ENCODE measurements at regions of chr16 and their contacts with region 1.

Region 1: GRCh38 chr16:29943846-29944669 is 17.8 kb upstream of the TMEM219 start:
- DNase-seq: no peak
- H3K4me3 ChIP-seq: no peak overlapping the region
- H3K4me3 Mint-ChIP-seq: no peak overlapping the region
- H3K27ac ChIP-seq: no peak overlapping the region
- H3K27ac Mint-ChIP-seq: no peak overlapping the region
- H3K4me1 ChIP-seq: no peaks in the 10 kb centered on the region
- H3K4me1 Mint-ChIP-seq: no peaks in the 10 kb centered on the region
- H3K27me3 ChIP-seq: no peaks in the 10 kb centered on the region
- H3K27me3 Mint-ChIP-seq: peaks cover 6 to 12% (median 10%) of the 10 kb centered on the region in 3 donors
- CTCF ChIP-seq: no peak

Region 2: GRCh38 chr16:29848420-29849297 is 95.4 kb before region 1 on chr16:
- intact Hi-C with region 1: no loop called
- DNase-seq: peak; percentile 64 to 70 (median 64)
- H3K4me3 ChIP-seq: no peak overlapping the region
- H3K4me3 Mint-ChIP-seq: no peak overlapping the region
- H3K27ac ChIP-seq: no peak overlapping the region
- H3K27ac Mint-ChIP-seq: no peak overlapping the region
- H3K4me1 ChIP-seq: no peaks in the 10 kb centered on the region
- H3K4me1 Mint-ChIP-seq: no peaks in the 10 kb centered on the region
- H3K27me3 ChIP-seq: no peaks in the 10 kb centered on the region
- H3K27me3 Mint-ChIP-seq: peaks cover 0 to 2% (median 1%) of the 10 kb centered on the region in 3 donors
- CTCF ChIP-seq: peak; percentile 92

Region 3: DNA sequence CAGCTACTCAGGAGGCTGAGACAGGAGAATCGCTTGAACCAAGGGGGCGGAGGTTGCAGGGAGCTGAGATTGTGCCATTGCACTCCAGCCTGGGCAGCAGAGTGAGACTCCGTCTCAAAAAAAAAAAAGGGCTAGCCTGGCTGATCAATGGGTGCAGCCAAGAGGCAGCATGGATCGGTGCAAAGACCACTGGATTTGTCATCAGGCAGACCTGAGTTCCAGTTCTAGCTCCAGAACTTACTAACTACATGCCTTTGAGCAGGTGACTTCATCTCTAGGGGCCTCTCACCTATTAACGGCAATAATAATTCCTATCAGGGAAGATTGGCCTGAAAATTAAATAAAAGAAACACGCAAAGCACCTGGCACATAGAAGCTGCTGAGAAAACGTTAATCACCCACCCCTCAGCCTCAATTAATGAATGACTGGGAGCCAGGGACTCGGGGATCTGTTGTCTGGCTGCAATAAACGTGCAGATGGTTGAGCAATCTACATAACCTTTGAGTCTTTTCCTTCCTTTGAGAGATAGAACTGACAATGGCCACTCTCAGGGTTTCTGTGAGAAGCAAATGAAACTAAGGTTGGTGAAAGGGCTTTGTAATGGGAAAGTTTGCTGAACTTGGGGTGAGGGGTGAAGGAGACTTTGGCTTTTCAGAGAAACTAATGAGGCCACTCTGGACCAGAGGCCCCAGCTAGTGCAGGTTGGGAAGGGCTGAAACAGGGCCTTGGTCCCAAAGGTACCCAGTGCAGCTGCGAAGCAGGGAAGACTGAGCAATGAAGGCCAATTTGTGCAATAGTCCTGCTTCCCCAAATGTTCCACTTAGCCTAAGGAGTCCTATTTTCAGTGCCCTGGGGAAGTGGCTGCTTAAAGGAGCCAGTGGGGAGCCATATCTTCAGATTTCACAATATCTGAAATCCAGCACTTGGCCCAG is 52.3 kb before region 1 on chr16:
- intact Hi-C with region 1: loop called in 1 of 2 experiments (anchors 2 kb)
- DNase-seq: peak; percentile 24 to 52 (median 42)
- H3K4me3 ChIP-seq: no peak overlapping the region
- H3K4me3 Mint-ChIP-seq: no peak overlapping the region
- H3K27ac ChIP-seq: no peak overlapping the region
- H3K27ac Mint-ChIP-seq: peak overlapping the region in 3 of 7 donors; percentile 15 to 40 (median 28)
- H3K4me1 ChIP-seq: peaks cover 12 to 16% of the 10 kb centered on the region in 2 donors
- H3K4me1 Mint-ChIP-seq: peaks cover 12% of the 10 kb centered on the region
- H3K27me3 ChIP-seq: no peaks in the 10 kb centered on the region
- H3K27me3 Mint-ChIP-seq: peaks cover 4 to 8% (median 4%) of the 10 kb centered on the region in 3 donors
- CTCF ChIP-seq: no peak

Region 4: DNA sequence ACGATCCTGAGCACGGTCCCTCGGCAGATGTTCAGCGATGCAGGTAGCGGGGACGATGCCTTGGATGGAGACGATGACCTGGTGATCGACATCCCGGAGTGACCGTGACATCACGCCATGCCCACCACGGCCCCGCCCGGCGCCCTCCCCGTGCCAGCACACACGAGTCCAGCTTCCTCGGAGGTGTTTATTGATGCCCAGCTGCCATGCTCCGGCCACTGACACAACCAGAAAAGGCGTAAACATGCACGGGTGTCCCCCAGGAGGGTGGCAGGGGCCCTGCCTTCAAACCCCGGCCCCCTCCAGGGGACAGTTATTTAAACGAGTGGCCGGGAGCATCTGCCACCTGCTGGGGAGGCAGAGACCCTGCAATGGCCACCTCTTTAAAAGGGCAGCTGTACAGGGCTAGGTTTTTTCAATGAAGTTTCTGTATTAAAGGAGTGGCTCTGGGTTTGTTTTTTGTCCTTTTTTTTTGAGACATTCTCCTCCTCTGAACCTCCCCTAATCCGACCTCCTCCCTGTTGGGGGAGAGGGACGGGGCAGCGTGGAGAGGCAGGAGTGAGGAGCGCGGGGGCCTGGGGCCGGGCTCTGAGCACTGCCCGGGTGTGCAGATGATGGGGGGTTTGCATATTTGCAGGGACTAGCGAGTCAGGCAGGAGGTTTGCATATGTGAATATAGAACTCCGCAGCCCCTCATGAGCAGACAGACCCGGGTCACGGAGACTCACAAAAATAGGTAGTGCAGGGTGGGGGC is 61.5 kb after region 1 on chr16:
- intact Hi-C with region 1: loop called in 1 of 2 experiments (anchors 5 kb)
- DNase-seq: peak; percentile 15 to 34 (median 26)
- H3K4me3 ChIP-seq: no peak overlapping the region
- H3K4me3 Mint-ChIP-seq: no peak overlapping the region
- H3K27ac ChIP-seq: no peak overlapping the region
- H3K27ac Mint-ChIP-seq: no peak overlapping the region
- H3K4me1 ChIP-seq: peaks cover 2 to 4% of the 10 kb centered on the region in 2 donors
- H3K4me1 Mint-ChIP-seq: peaks cover 2% of the 10 kb centered on the region
- H3K27me3 ChIP-seq: peaks cover 6 to 15% of the 10 kb centered on the region in 2 donors
- H3K27me3 Mint-ChIP-seq: peaks cover 12 to 25% (median 18%) of the 10 kb centered on the region in 3 donors
- CTCF ChIP-seq: peak; percentile 77

Region 5: DNA sequence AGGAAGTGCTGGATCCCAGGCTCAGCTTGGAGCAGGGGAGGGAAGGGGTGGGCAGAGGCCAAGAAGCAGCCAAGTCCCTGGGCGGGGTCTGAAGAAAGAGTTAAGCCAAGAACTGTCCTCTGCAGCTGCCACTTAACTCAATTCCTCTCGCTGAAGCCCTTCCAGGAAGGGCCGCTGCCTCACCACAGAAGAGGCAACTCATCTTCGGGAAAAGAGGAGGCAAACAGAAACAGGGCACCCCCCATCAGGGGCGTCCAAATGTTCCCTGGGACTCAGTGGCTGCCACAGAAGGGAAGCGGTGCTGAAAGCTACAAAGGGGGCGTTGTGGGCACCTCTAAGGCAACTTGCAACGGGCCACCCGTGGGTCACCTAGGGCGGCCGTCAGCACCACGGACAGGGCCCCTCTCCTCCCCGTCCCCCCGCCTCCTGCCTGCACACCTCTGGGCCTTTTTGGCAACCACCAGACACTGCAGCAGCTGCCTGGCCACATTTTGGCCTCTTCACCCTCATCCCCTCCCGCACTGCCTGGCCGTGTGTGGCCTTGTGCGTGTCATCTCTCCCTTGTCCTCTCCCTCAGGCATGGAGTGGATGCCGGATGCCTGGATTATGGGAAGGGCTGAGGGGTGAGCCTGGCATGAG is 84.5 kb after region 1 on chr16:
- intact Hi-C with region 1: loop called in 1 of 2 experiments (anchors 10 kb)
- DNase-seq: no peak
- H3K4me3 ChIP-seq: no peak overlapping the region
- H3K4me3 Mint-ChIP-seq: peak overlapping the region in 1 of 2 donors; percentile 77
- H3K27ac ChIP-seq: no peak overlapping the region
- H3K27ac Mint-ChIP-seq: peak overlapping the region in 1 of 7 donors; percentile 50
- H3K4me1 ChIP-seq: peaks cover 0 to 4% of the 10 kb centered on the region in 2 donors
- H3K4me1 Mint-ChIP-seq: peaks cover 1% of the 10 kb centered on the region
- H3K27me3 ChIP-seq: peaks cover 30 to 59% of the 10 kb centered on the region in 2 donors
- H3K27me3 Mint-ChIP-seq: peaks cover 52 to 72% (median 66%) of the 10 kb centered on the region in 3 donors
- CTCF ChIP-seq: no peak

Region 6: DNA sequence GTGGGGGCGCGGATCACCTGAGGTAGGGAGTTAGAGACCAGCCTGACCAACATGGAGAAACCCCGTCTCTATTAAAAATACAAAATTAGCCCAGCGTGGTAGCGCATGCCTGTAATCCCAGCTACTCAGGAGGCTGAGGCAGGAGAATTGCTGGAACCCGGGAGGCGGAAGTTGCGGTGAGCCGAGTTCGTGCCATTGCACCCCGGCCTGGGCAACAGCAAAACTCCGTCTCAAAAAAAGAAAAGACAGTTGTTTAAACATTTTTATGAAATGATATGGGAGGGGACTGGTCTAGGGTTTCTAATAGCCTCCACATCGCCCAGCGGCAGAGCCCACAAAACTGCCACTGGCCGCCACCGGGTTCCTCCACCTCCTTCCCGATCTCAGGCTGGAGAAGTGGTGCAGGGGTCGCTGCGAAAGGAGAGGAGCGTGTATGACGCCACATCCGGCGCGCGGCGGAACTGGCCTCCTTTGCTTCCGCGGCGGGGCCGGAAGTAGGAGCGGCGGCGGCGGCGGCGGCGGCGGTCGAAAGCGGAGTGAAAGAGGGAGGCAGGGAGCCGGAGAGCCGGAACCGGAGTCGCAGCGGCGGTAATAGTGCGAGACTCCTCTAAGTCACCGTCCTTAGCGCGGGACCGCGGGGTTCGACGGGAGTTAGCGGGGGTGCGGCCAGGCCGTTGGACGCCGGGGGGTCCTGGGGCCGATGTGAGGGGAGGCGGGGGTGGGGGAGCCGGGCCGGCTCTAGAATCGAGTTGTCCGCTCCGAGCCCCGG is 131.6 kb after region 1 on chr16 and contains the start of gene PPP4C:
- intact Hi-C with region 1: no loop called
- DNase-seq: peak; percentile 86 to 92 (median 87)
- H3K4me3 ChIP-seq: peak within 1 kb of the TSS; percentile 69 to 93 (median 83)
- H3K4me3 Mint-ChIP-seq: peak within 1 kb of the TSS; percentile 90
- H3K27ac ChIP-seq: peak within 1 kb of the TSS; percentile 83 to 92
- H3K27ac Mint-ChIP-seq: peak within 1 kb of the TSS; percentile 91 to 96 (median 96)
- H3K4me1 ChIP-seq: peaks cover 24 to 39% of the 10 kb centered on the region in 2 donors
- H3K4me1 Mint-ChIP-seq: peaks cover 31% of the 10 kb centered on the region
- H3K27me3 ChIP-seq: no peaks in the 10 kb centered on the region
- H3K27me3 Mint-ChIP-seq: no peaks in the 10 kb centered on the region
- CTCF ChIP-seq: no peak
- polyA plus RNA-seq, gene PPP4C: 186 to 388 (median 279) TPM